GM12878 (cell line): ENCODE measurements at regions of chr19 and their contacts with region 1.

Region 1: DNA sequence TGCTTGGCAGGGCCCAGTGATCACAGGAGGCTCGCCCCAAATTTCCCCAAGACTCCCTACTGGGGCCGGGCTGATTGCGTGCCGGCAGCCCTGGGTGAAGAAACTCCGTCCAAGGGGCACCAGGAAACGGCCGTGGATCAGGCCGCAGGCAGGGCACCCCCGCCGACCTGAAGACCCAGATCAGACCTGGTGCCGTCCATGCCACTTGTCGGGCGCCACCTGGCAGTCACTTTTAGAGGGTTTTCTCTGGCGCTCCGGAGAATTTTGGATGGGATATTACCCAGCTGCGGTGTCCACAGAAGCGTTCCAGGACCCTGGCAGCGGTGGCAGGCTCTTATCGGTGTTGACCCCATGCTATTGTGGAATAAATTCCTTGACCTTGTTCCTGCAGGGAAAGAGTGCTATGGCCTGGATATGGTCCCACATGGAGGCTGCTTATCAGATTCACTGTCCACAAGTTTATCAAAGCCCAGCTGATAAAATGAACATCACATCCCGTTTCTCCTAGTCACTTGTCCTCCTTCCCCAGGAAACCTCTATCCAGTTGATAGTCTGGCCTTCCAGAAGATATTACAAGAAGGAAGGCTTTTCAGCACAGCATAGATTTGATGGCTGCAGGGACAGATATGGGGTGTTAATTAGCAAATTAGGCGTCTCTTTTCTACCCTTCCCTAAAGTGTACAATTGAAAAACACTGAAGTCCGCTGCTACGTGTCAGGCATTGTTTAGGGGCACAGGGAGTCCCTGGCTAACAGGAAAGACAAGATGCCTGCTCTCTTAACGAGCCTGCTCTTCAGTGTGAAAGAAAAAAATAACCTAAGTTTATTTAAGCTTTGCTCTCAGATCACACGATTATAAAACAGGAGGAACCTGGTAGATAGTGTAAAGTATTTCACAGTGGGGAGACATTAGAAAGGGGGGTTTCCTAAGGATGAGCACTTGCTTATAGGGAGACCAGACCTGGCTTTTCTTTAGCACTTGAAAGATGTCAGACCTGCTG is 38.4 kb downstream of the IGFL2 start:
- DNase-seq: no peak
- ATAC-seq: no peak
- H3K4me3 ChIP-seq: no peak overlapping the region
- H3K27ac ChIP-seq: no peak overlapping the region
- H3K4me1 ChIP-seq: peaks cover 3% of the 10 kb centered on the region; the same call in 1 of the 2 replicates
- H3K27me3 ChIP-seq: peaks cover 0 to 4% of the 10 kb centered on the region in 2 experiments; a peak in 1 of 4 replicates
- CTCF ChIP-seq: no peak
- EP300 ChIP-seq: no peak
- POLR2A ChIP-seq: no peak
- RAD21 ChIP-seq: no peak

Region 2: DNA sequence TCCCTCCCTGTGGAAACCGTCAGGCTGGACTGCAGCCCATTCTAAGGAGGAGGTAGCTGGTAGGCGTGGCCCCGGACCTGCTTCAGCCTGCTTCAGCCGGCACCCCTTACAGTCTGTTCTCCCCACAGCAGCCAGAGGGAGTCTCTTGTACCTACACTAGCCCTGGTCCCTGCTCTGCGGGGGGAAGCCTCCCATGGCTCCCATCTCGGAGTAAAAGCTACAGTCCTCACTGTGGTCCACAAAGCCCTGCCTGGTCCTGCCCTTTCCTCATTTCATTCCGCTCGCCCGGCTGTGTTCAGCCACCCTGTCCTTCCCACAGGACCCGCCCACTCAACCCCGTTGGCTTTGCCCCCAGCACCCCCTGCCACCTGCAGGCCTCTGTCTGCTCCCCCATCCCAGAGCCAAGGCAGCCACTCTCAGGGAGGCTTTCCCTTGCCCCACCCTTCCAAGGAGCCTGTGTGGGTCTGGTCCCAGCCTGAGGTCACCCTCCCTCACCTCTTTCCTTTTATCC is 164.8 kb before region 1 on chr19:
- CTCF ChIA-PET with region 1: no interaction called
- POLR2A ChIA-PET with region 1: no interaction called
- RAD21 ChIA-PET with region 1: no interaction called
- SMC1A ChIA-PET with region 1: interaction called, 15 read pairs
- in situ Hi-C with region 1: no loop called
- intact Hi-C with region 1: loop called (anchors 5 kb)
- DNase-seq: no peak
- ATAC-seq: no peak
- H3K4me3 ChIP-seq: no peak overlapping the region
- H3K27ac ChIP-seq: no peak overlapping the region
- H3K4me1 ChIP-seq: no peaks in the 10 kb centered on the region
- H3K27me3 ChIP-seq: no peaks in the 10 kb centered on the region
- CTCF ChIP-seq: no peak
- EP300 ChIP-seq: no peak
- POLR2A ChIP-seq: no peak
- RAD21 ChIP-seq: no peak

Region 3: GRCh38 chr19:46076951-46077816 is 109.2 kb before region 1 on chr19:
- CTCF ChIA-PET with region 1: interaction called, 25 read pairs
- POLR2A ChIA-PET with region 1: no interaction called
- RAD21 ChIA-PET with region 1: interaction called, 18 read pairs
- SMC1A ChIA-PET with region 1: interaction called, 6 read pairs
- in situ Hi-C with region 1: loop called (anchors 5 kb)
- intact Hi-C with region 1: loop called (anchors 1 kb)
- DNase-seq: no peak
- ATAC-seq: peak; percentile 87
- H3K4me3 ChIP-seq: no peak overlapping the region
- H3K27ac ChIP-seq: no peak overlapping the region
- H3K4me1 ChIP-seq: no peaks in the 10 kb centered on the region
- H3K27me3 ChIP-seq: peaks cover 3 to 9% of the 10 kb centered on the region in 2 experiments; a peak in 3 of 4 replicates
- CTCF ChIP-seq: peak; percentile 54 to 71 (median 62)
- EP300 ChIP-seq: no peak
- POLR2A ChIP-seq: no peak
- RAD21 ChIP-seq: peak; percentile 45; the same call in 1 of the 2 replicates